ENCODE measurements at regions of chr9 and their contacts with region 1.

Region 1: GRCh38 chr9:92535940-92536850 is at the start of gene ECM2:
- DNase-seq: no peak
- H3K4me3 ChIP-seq: peak within 1 kb of the TSS; percentile 55 to 56
- H3K27ac ChIP-seq: peak within 1 kb of the TSS; percentile 72
- H3K4me1 ChIP-seq: peaks cover 5 to 19% of the 10 kb centered on the region in 2 donors
- H3K27me3 ChIP-seq: no peaks in the 10 kb centered on the region
- CTCF ChIP-seq: no peak
- total RNA-seq, gene ECM2: 20.1 TPM

Region 2: GRCh38 chr9:92349771-92350739 is 186.1 kb before region 1 on chr9:
- intact Hi-C with region 1: loop called (anchors 2 kb)
- DNase-seq: no peak
- H3K4me3 ChIP-seq: peak overlapping the region in 1 of 2 donors; percentile 17
- H3K27ac ChIP-seq: peak overlapping the region; percentile 77 to 85
- H3K4me1 ChIP-seq: peaks cover 0 to 16% of the 10 kb centered on the region in 2 donors
- H3K27me3 ChIP-seq: no peaks in the 10 kb centered on the region
- CTCF ChIP-seq: no peak

Region 3: GRCh38 chr9:92406477-92406876 is 129.7 kb before region 1 on chr9:
- intact Hi-C with region 1: loop called (anchors 5 kb)
- DNase-seq: peak; percentile 23 to 77
- H3K4me3 ChIP-seq: peak overlapping the region; percentile 18 to 64
- H3K27ac ChIP-seq: peak overlapping the region; percentile 82 to 84
- H3K4me1 ChIP-seq: peaks cover 0 to 7% of the 10 kb centered on the region in 2 donors
- H3K27me3 ChIP-seq: no peaks in the 10 kb centered on the region
- CTCF ChIP-seq: no peak

Region 4: GRCh38 chr9:92463984-92464383 is 72.2 kb before region 1 on chr9:
- intact Hi-C with region 1: loop called (anchors 1 kb)
- DNase-seq: peak in 1 of 2 donors; percentile 73
- H3K4me3 ChIP-seq: no peak overlapping the region
- H3K27ac ChIP-seq: peak overlapping the region; percentile 94 to 95
- H3K4me1 ChIP-seq: peaks cover 3 to 22% of the 10 kb centered on the region in 2 donors
- H3K27me3 ChIP-seq: no peaks in the 10 kb centered on the region
- CTCF ChIP-seq: no peak

Region 5: GRCh38 chr9:92501671-92502393 is 34.4 kb before region 1 on chr9:
- intact Hi-C with region 1: loop called (anchors 2 kb)
- DNase-seq: peak; percentile 21 to 86
- H3K4me3 ChIP-seq: no peak overlapping the region
- H3K27ac ChIP-seq: peak overlapping the region; percentile 60 to 76
- H3K4me1 ChIP-seq: peaks cover 23 to 36% of the 10 kb centered on the region in 2 donors
- H3K27me3 ChIP-seq: no peaks in the 10 kb centered on the region
- CTCF ChIP-seq: peak in 2 of 3 experiments; percentile 22 to 37

Region 6: DNA sequence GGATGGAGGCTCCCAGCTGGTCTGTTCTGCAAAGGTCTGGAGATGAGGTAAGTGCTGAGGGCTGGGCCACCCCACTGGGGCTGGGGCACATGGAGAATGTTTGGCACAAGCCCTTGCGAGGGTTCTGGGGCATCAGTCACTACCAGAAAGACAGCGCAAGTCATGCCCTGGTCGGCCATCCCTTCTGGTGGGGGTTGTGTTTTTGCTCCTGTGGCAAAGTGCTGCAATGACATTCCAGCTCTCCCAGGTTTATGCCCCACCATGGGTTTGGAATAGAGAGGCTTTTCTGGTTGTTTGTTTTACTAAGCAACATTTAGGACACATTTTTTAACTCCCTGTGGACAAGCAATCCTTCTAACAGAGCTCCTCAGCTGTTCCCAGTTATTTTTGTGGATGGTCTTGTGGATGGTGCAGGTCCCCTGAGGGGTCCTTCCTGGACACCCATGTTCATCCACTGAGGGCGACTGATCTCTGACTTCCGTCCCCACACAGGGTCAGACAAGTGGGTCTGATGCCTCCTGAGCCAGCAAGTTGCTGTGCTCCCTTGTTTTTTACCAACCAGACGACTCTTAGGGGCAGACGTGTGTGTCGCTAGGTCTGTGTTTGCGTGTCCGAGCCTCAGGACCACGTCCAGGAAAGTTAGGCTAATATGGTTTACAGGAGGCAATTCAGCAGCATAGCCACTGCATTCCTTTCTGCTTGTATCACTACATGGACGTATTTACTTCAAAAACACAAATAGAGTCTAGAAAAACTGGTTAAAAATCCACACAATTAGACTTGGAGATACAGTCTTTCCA is 64.5 kb after region 1 on chr9:
- intact Hi-C with region 1: loop called (anchors 5 kb)
- DNase-seq: no peak
- H3K4me3 ChIP-seq: peak overlapping the region in 1 of 2 donors; percentile 9
- H3K27ac ChIP-seq: peak overlapping the region; percentile 83 to 85
- H3K4me1 ChIP-seq: peaks cover 7 to 44% of the 10 kb centered on the region in 2 donors
- H3K27me3 ChIP-seq: no peaks in the 10 kb centered on the region
- CTCF ChIP-seq: no peak

Region 7: DNA sequence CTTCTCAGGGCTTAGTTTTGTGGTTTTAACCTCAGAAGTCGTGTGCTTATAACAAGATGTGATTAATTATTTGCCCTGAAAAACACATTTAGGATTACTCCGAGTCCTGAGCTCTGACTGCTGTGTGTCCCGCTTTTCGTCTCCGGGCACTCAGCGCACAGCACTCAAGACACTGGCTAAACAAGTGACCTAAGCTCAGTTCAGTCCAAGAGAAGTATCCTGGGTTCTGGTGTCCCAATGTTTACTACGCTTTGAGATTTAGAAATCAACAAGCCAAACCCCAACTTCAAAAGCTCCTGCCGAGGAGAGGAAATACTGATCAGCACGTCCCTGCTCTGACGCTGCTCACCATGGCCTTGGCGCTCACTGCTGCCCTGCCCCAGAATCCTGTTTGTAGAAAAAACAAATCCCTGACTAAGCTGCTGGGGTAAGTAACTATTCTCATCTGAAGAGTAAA is 80.5 kb after region 1 on chr9:
- intact Hi-C with region 1: loop called (anchors 5 kb)
- DNase-seq: no peak
- H3K4me3 ChIP-seq: peak overlapping the region; percentile 35 to 49
- H3K27ac ChIP-seq: peak overlapping the region; percentile 77
- H3K4me1 ChIP-seq: peaks cover 11 to 41% of the 10 kb centered on the region in 2 donors
- H3K27me3 ChIP-seq: no peaks in the 10 kb centered on the region
- CTCF ChIP-seq: no peak

Measured in ascending aorta (tissue), 2 donors.